Endothelial cell of umbilical vein (primary cell): ENCODE measurements at regions of chr6 and their contacts with region 1.

Region 1: DNA sequence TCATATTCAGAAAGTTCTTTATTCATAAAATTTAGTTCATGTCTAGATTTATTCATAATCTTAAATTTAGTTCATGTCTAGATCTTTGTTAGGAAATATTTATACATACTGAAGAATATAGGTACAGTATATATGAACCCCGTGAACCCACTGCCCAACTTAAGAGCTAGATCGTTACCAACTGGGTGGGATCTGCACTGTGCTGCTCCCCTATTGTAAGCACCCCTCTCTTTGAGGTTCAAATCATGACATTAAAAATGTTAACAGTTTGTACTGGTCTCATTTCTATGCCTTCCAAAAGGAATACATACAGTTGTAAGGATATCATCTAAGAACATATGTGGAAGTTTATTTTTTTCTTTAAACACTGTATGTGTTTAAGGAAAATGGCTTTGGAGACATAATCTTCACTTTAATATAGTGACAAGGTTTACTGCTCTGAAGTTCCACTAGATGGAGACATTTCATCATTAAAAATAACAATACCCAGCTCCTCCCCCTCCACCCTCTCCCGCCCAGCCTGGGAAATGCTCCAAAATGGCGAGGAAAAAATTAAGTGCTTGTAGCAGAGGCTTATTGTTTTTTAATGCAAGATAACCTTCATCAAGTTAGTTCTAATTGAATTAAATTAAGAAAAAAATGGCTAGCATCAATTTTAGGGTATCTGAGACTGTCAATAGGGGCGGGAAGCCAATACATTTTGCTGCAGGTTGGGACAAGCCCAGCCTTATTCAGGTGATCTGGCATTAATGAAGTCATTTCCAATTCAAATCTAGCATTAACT is 104.1 kb upstream of the TRAF3IP2 start:
- DNase-seq: peak; percentile 84
- H3K4me3 ChIP-seq: no peak overlapping the region
- H3K27ac ChIP-seq: peak overlapping the region; percentile 26
- H3K4me1 ChIP-seq: peaks cover 4% of the 10 kb centered on the region
- H3K27me3 ChIP-seq: no peaks in the 10 kb centered on the region
- CTCF ChIP-seq: peak; percentile 36 to 57
- POLR2A ChIP-seq: no peak

Region 2: DNA sequence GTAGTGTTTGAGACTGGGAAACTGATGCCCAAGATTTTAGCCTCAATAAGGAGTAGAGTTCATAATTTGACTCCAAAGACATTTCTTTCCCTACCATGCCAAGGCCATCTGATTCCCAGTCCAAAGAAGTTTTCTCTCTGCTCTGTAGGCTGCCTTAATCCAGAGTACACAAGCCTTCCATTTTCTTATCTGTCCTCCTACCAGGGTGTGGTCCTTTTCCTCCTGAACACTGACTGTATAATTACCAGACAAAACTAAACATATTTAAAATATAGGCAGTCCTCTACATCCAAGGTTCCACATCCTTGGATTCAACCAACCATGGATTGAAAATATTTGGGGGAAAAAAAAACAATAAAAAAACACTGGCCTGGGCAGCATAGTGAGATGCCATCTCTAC is 514.2 kb before region 1 on chr6:
- CTCF ChIA-PET with region 1: no interaction called
- POLR2A ChIA-PET with region 1: no interaction called
- dilution Hi-C with region 1: no loop called
- intact Hi-C with region 1: no loop called
- DNase-seq: no peak
- H3K4me3 ChIP-seq: no peak overlapping the region
- H3K27ac ChIP-seq: no peak overlapping the region
- H3K4me1 ChIP-seq: no peaks in the 10 kb centered on the region
- H3K27me3 ChIP-seq: peaks cover 6 to 7% of the 10 kb centered on the region in 2 experiments
- CTCF ChIP-seq: no peak
- POLR2A ChIP-seq: no peak

Region 3: GRCh38 chr6:111399626-111400025 is 310.2 kb before region 1 on chr6:
- CTCF ChIA-PET with region 1: no interaction called
- POLR2A ChIA-PET with region 1: no interaction called
- dilution Hi-C with region 1: no loop called
- intact Hi-C with region 1: no loop called
- DNase-seq: no peak
- H3K4me3 ChIP-seq: no peak overlapping the region
- H3K27ac ChIP-seq: no peak overlapping the region
- H3K4me1 ChIP-seq: no peaks in the 10 kb centered on the region
- H3K27me3 ChIP-seq: no peaks in the 10 kb centered on the region
- CTCF ChIP-seq: no peak
- POLR2A ChIP-seq: no peak

Region 4: GRCh38 chr6:111692327-111693164 is 17.3 kb before region 1 on chr6:
- CTCF ChIA-PET with region 1: interaction called, 5 read pairs
- POLR2A ChIA-PET with region 1: no interaction called
- dilution Hi-C with region 1: no loop called
- intact Hi-C with region 1: loop called (anchors 1 kb)
- DNase-seq: no peak
- H3K4me3 ChIP-seq: no peak overlapping the region
- H3K27ac ChIP-seq: no peak overlapping the region
- H3K4me1 ChIP-seq: peaks cover 8% of the 10 kb centered on the region
- H3K27me3 ChIP-seq: no peaks in the 10 kb centered on the region
- CTCF ChIP-seq: no peak
- POLR2A ChIP-seq: no peak

Region 5: GRCh38 chr6:111823831-111824607 is 114.2 kb after region 1 on chr6:
- CTCF ChIA-PET with region 1: interaction called, 10 read pairs
- POLR2A ChIA-PET with region 1: no interaction called
- dilution Hi-C with region 1: no loop called
- intact Hi-C with region 1: no loop called
- DNase-seq: peak; percentile 88
- H3K4me3 ChIP-seq: peak overlapping the region in 1 of 3 experiments; percentile 58
- H3K27ac ChIP-seq: peak overlapping the region; percentile 81
- H3K4me1 ChIP-seq: peaks cover 25% of the 10 kb centered on the region
- H3K27me3 ChIP-seq: no peaks in the 10 kb centered on the region
- CTCF ChIP-seq: no peak
- POLR2A ChIP-seq: no peak

Region 6: DNA sequence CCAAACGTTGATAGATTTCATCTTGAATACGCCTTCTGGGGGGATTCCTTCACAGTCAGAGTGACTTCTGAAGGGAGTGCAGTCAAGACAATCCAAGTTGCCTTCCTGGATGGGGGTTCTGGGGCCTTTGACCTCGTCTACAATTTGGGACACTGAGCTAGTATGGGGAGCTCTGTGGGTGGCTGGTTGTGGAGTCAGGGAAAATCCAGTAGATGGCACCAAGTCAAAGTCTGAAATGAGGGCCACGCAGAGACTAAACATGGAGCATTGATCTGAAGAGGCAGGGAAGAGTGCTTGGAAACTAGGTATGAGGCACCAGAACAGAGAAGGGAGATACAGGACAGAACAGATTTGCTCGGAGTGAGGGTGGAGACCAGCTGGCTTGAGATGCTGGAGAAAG is 300.5 kb after region 1 on chr6:
- CTCF ChIA-PET with region 1: interaction called, 14 read pairs
- POLR2A ChIA-PET with region 1: no interaction called
- dilution Hi-C with region 1: no loop called
- intact Hi-C with region 1: no loop called
- DNase-seq: no peak
- H3K4me3 ChIP-seq: no peak overlapping the region
- H3K27ac ChIP-seq: no peak overlapping the region
- H3K4me1 ChIP-seq: peaks cover 9% of the 10 kb centered on the region
- H3K27me3 ChIP-seq: no peaks in the 10 kb centered on the region
- CTCF ChIP-seq: no peak
- POLR2A ChIP-seq: no peak

Region 7: GRCh38 chr6:112037783-112038216 is 328.0 kb after region 1 on chr6:
- CTCF ChIA-PET with region 1: interaction called, 30 read pairs
- POLR2A ChIA-PET with region 1: interaction called, 6 read pairs
- dilution Hi-C with region 1: no loop called
- intact Hi-C with region 1: no loop called
- DNase-seq: peak; percentile 91
- H3K4me3 ChIP-seq: no peak overlapping the region
- H3K27ac ChIP-seq: peak overlapping the region; percentile 87
- H3K4me1 ChIP-seq: peaks cover 46% of the 10 kb centered on the region
- H3K27me3 ChIP-seq: no peaks in the 10 kb centered on the region
- CTCF ChIP-seq: no peak
- POLR2A ChIP-seq: no peak